Gastrocnemius medialis (tissue), 4 donors: ENCODE measurements at regions of chr6 and their contacts with region 1.

Region 1: DNA sequence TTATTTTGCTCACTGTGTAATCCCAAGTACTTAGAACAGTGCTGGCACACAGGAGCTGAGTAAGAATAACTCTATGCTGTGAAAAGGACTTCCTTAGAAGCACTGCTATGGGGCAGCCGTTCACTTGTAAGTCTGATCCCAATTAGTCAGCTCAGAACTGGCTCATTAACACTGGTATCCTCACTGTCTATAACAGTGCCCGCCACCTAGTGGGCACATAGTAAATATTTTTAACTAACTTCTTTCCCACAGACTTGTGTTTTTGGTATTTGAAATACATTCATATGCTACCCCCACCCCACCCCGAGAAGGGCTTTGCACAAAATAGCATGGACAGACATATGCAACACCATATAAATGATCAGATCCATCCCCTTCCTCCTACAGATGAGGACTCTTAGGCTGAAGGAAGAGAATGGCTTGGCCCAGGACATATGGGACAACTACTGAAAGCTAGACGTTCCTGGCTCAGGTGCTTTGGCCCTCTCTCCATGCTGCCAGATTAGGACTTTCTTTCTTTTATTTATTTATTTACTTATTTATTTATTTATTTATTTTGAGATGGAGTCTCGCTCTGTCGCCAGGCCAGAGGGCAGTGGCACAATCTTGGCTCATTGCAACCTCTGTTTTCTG is 47.1 kb downstream of the DST start:
- DNase-seq: no peak
- ATAC-seq: no peak
- H3K4me3 ChIP-seq: no peak overlapping the region
- H3K27ac ChIP-seq: no peak overlapping the region
- H3K4me1 ChIP-seq: no peaks in the 10 kb centered on the region
- H3K27me3 ChIP-seq: no peaks in the 10 kb centered on the region
- CTCF ChIP-seq: peak in 4 of 5 experiments; percentile 22 to 62 (median 47)
- POLR2A ChIP-seq: no peak

Region 2: GRCh38 chr6:56555438-56555872 is 40.2 kb before region 1 on chr6:
- in situ Hi-C with region 1: no loop called
- intact Hi-C with region 1: loop called (anchors 5 kb)
- DNase-seq: no peak
- ATAC-seq: peak; percentile 44 to 69
- H3K4me3 ChIP-seq: no peak overlapping the region
- H3K27ac ChIP-seq: peak overlapping the region; percentile 17 to 57 (median 42)
- H3K4me1 ChIP-seq: peaks cover 18 to 21% of the 10 kb centered on the region in 2 donors
- H3K27me3 ChIP-seq: no peaks in the 10 kb centered on the region
- CTCF ChIP-seq: no peak
- POLR2A ChIP-seq: no peak